Right ventricle myocardium inferior (tissue), 1 donor: ENCODE measurements at regions of chr1 and their contacts with region 1.

Region 1: DNA sequence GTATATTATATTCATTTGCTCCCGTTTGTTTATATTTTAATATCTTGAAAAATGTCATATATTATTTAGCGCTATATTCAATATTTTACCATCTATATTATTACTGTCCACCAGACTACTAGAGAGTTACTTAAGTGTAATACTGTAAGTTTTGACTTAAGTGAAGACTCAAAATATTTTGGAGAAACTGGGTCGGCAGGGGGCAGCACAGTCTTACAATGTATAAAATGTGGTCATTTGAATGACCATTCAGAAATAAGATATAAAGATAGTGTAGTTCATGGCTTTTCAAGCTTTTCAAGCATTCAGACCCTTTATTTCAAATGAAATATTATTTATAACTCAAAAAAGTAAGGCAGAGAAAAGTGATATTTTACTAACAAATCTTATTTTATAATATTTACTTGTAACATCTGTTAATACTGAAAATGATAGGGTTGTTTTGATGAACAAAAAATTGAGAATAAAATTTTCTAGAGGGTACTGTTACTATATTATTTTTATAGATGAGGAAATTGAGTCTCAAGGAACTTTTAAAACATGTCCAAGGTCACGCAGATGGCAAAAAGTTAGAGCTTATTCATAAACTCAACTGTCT is 89.0 kb upstream of the SERTAD4 start:
- DNase-seq: peak; percentile 71
- ATAC-seq: no peak

Region 2: GRCh38 chr1:210264981-210265380 is 121.4 kb after region 1 on chr1:
- intact Hi-C with region 1: loop called (anchors 1 kb)
- DNase-seq: no peak
- ATAC-seq: no peak

Region 3: GRCh38 chr1:210311726-210312493 is 168.3 kb after region 1 on chr1:
- intact Hi-C with region 1: loop called (anchors 1 kb)
- DNase-seq: no peak
- ATAC-seq: peak; percentile 87

Region 4: GRCh38 chr1:210400043-210400840 is 256.7 kb after region 1 on chr1:
- intact Hi-C with region 1: loop called (anchors 2 kb)
- DNase-seq: no peak
- ATAC-seq: peak; percentile 94